ENCODE measurements at regions of chr7 and their contacts with region 1.

Region 1: DNA sequence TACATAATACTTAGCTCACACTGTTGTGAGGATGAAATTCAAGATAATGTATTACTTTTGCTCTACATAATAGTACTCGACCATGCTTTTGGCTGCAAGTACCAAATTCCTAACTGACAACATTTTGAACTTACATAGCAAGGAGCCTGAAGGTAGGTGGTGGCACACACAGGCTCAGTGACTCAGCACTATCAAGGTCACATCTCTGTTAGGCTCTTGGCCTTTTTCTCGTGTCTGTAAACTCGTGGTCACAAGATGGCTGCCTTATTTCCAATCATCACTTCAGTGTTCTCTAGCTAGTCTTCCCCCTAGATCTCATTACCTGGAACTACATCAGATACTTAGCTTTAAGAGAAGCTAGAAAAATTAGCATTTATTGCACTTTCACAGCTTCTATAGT is 61.4 kb upstream of the ABCB5 start:
- DNase-seq: no peak
- H3K4me3 ChIP-seq: no peak overlapping the region
- H3K27ac ChIP-seq: no peak overlapping the region
- H3K4me1 ChIP-seq: no peaks in the 10 kb centered on the region
- H3K27me3 ChIP-seq: no peaks in the 10 kb centered on the region
- CTCF ChIP-seq: no peak

Region 2: GRCh38 chr7:20519645-20520044 is 34.4 kb before region 1 on chr7:
- intact Hi-C with region 1: loop called (anchors 2 kb)
- DNase-seq: no peak
- H3K4me3 ChIP-seq: no peak overlapping the region
- H3K27ac ChIP-seq: no peak overlapping the region
- H3K4me1 ChIP-seq: no peaks in the 10 kb centered on the region
- H3K27me3 ChIP-seq: no peaks in the 10 kb centered on the region
- CTCF ChIP-seq: no peak